Naive thymus-derived CD8-positive, alpha-beta T cell (primary cell): ENCODE measurements at regions of chr11 and their contacts with region 1.

Region 1: DNA sequence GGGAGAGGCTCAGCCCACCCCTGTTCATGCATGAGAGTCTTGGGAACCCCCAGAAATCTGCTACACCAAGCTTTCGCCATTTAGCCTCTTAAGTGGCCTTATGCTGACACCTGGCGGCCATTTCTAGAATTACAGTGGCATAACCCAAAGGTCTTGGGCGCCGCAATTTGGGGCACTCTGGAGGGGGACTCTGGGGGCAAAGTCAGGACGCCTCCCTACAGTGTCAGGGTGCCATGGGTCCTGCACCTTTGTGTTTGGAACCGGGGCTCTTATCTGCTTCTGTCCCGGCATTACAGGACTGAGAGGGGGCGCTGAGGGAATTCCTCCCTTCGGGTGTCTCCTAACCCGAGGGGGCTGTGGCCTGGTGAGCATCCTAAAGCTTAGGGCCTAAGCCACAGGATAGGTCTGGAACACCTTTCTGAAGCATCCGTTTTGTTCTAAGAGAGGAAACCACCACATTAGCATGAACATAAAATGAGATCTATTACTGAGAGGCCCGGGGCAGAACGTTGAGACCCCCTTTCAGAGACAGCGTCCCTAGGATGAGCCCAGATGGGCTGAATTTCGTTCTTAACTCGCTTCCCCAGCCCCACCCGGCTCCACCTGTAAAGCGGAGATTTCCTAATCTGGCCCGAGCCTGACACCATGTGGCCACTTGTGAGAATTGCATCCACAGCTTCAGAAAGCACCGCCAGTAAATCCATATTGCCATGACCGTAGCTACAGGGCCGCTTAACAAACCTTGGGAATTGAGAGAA is 9.3 kb downstream of the INS start:
- DNase-seq: peak; percentile 68 to 90 (median 78)
- ATAC-seq: peak; percentile 85 to 89
- H3K4me3 Mint-ChIP-seq: peak overlapping the region; percentile 18 to 74 (median 52)
- H3K27ac Mint-ChIP-seq: peak overlapping the region in 5 of 10 donors; percentile 27 to 55 (median 33)
- H3K4me1 Mint-ChIP-seq: peaks cover 7 to 11% (median 7%) of the 10 kb centered on the region in 4 donors
- H3K27me3 Mint-ChIP-seq: peaks cover 7 to 46% (median 32%) of the 10 kb centered on the region in 5 donors

Region 2: GRCh38 chr11:2036863-2037486 is 114.7 kb before region 1 on chr11:
- POLR2A ChIA-PET with region 1: interaction called, 11 read pairs
- DNase-seq: no peak
- ATAC-seq: peak; percentile 59 to 60
- H3K4me3 Mint-ChIP-seq: no peak overlapping the region
- H3K27ac Mint-ChIP-seq: no peak overlapping the region
- H3K4me1 Mint-ChIP-seq: no peaks in the 10 kb centered on the region
- H3K27me3 Mint-ChIP-seq: no peaks in the 10 kb centered on the region

Region 3: GRCh38 chr11:2166091-2166851 is 14.6 kb after region 1 on chr11:
- POLR2A ChIA-PET with region 1: no interaction called
- DNase-seq: peak in 9 of 10 donors; percentile 17 to 53 (median 50)
- ATAC-seq: peak; percentile 82 to 83
- H3K4me3 Mint-ChIP-seq: no peak overlapping the region
- H3K27ac Mint-ChIP-seq: no peak overlapping the region
- H3K4me1 Mint-ChIP-seq: no peaks in the 10 kb centered on the region
- H3K27me3 Mint-ChIP-seq: peaks cover 0 to 24% (median 1%) of the 10 kb centered on the region in 5 donors